Dorsolateral prefrontal cortex (tissue), 120 donors: ENCODE measurements at regions of chr9 and their contacts with region 1.

Region 1: GRCh38 chr9:90773617-90774016 is 28.0 kb upstream of the SYK start:
- DNase-seq: no peak
- H3K4me3 ChIP-seq: no peak overlapping the region
- H3K27ac ChIP-seq: no peak overlapping the region
- H3K27me3 ChIP-seq: no peaks in the 10 kb centered on the region
- CTCF ChIP-seq: peak in 35 of 56 donors; percentile 8 to 46 (median 29)

Region 2: DNA sequence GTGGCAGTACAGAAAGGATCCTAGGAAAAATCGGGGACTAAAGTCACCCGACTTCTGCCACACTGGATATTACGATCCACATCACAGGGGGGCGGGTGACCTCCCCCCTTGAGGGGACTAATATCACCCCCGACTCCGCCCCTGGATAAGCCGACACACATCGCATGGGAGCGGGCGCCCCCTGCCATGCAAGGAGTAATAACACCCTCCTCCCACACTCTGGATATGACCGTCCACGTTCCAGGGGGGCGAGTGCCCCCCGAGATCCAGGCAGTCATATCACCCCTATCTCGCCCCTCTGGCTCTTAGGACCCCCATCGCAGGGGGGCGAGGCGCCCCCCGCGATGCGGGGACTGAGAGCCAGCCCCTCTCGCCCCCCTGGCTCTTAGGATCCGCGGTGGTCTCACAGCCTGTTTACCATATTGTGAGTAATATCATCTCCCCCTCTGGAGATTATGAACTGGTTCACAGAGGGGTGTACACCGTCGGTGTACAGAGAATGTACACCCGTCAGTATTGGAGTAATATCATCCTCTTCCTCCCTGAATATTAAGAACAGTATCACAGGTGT is 554.0 kb before region 1 on chr9:
- intact Hi-C with region 1: loop called in 1 of 2 experiments (anchors 10 kb)
- DNase-seq: no peak
- H3K4me3 ChIP-seq: peak overlapping the region in 3 of 59 donors; percentile 2 to 4 (median 3)
- H3K27ac ChIP-seq: no peak overlapping the region
- H3K27me3 ChIP-seq: peaks cover 0 to 12% (median 0%) of the 10 kb centered on the region in 45 donors
- CTCF ChIP-seq: peak in 25 of 56 donors; percentile 0 to 48 (median 19)

Region 3: DNA sequence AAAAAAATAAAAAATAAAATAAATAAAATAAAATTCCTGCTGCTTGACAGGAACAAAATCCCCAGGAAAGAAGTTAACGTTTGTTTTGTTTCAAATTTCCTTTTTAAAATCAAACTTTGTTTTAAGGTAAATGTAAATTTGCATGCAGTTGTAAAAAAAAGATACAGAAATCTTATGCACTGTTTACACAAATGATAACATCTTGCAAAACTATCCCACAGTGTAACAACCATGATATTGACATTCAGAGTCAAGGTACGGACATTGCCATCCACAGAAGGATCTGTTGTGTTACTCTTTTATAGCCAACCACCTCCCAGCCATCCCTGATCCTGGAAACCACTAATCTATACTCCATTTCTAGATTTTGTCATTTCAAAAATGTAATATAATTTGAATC is 414.4 kb before region 1 on chr9:
- intact Hi-C with region 1: no loop called
- DNase-seq: no peak
- H3K4me3 ChIP-seq: no peak overlapping the region
- H3K27ac ChIP-seq: no peak overlapping the region
- H3K27me3 ChIP-seq: no peaks in the 10 kb centered on the region
- CTCF ChIP-seq: no peak

Region 4: GRCh38 chr9:90539286-90539685 is 234.3 kb before region 1 on chr9:
- intact Hi-C with region 1: no loop called
- DNase-seq: peak in 1 of 10 donors; percentile 58
- H3K4me3 ChIP-seq: no peak overlapping the region
- H3K27ac ChIP-seq: peak overlapping the region in 1 of 59 donors; percentile 89
- H3K27me3 ChIP-seq: no peaks in the 10 kb centered on the region
- CTCF ChIP-seq: no peak